ENCODE measurements at regions of chr17 and their contacts with region 1.

Region 1: DNA sequence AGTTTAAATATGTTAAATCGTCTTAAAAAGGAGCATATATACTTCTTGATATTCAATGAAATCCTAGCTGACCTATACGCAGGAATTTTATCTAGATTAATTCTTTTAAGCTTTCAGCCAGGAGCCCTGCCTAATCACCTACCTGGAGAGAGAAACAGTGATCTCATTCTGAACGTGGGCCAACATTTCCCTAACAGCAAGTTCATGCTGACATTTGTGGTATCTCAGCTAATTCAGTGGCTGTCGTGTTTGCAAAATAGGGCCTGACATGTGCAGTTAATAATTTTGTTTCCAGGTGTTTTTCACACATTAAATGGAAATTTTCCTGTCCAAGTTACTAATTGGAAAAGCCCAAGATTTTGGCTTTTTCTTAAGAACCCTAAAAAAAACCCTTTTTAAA is 17.4 kb downstream of the KRT24 start:
- DNase-seq: no peak
- ATAC-seq: no peak
- H3K4me3 ChIP-seq: no peak overlapping the region
- H3K27ac ChIP-seq: no peak overlapping the region
- H3K4me1 ChIP-seq: no peaks in the 10 kb centered on the region
- H3K27me3 ChIP-seq: no peaks in the 10 kb centered on the region

Region 2: DNA sequence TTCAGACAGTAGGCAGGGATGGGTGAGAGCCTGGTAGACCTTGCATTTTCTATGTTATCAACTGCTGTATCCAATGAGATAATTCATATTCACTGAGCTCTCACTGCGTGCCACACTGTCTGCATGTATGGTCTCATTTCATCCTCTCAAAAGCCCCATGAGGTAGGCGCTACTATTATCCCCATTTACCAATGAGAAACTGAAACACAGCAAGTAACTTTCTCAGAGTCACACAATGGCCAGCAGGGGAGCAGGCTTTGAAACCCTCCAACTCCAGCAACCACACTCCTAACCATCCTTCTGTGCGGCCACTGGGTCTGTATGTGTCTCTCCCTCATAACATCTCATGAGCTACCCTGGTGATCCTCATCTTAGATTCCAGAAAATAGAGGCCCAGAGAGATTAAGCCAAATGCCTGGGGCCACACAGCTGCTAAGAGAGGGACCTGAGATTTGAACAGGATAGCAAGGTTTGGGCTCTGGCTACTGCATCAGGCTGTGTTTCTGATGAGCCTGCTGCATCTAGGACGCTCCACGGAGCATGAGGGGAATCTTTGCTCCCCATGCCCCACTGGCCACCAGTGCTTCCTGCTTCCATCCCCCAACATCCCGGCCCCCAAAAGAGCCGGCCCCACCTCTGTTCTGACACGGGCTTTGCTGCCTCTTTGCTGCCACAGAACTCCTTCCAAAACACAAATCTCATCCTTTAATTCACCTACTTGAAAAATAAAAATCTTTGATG is 124.2 kb before region 1 on chr17:
- intact Hi-C with region 1: no loop called
- DNase-seq: peak; percentile 39 to 51
- ATAC-seq: no peak
- H3K4me3 ChIP-seq: no peak overlapping the region
- H3K27ac ChIP-seq: no peak overlapping the region
- H3K4me1 ChIP-seq: no peaks in the 10 kb centered on the region
- H3K27me3 ChIP-seq: no peaks in the 10 kb centered on the region

Region 3: DNA sequence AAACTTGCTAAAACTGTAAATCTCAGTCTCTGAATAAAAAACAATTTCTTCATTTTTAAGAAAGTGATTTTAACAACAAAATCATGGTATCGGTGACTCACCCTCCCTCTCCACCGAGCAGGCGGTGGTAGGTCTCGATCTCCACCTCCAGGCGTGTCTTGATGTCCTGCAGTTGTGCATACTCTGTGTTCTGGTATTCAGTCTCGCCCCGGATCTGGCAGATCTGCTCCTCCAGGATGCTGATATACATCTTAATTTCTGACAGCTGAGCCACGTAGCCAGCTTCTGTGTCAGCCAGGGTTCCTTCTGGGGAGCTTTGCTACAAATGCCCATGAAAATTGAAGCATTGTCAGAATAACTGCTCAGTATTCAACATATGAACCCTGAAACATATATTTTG is 32.7 kb after region 1 on chr17:
- intact Hi-C with region 1: loop called in 1 of 2 experiments (anchors 2 kb)
- DNase-seq: no peak
- ATAC-seq: no peak
- H3K4me3 ChIP-seq: no peak overlapping the region
- H3K27ac ChIP-seq: no peak overlapping the region
- H3K4me1 ChIP-seq: peaks cover 0 to 1% of the 10 kb centered on the region in 2 donors
- H3K27me3 ChIP-seq: peaks cover 0 to 1% of the 10 kb centered on the region in 2 donors

Region 4: GRCh38 chr17:40791787-40792436 is 105.7 kb after region 1 on chr17:
- intact Hi-C with region 1: no loop called
- DNase-seq: no peak
- ATAC-seq: peak; percentile 82
- H3K4me3 ChIP-seq: no peak overlapping the region
- H3K27ac ChIP-seq: no peak overlapping the region
- H3K4me1 ChIP-seq: peaks cover 0 to 2% of the 10 kb centered on the region in 2 donors
- H3K27me3 ChIP-seq: no peaks in the 10 kb centered on the region